Endothelial cell of umbilical vein (primary cell): ENCODE measurements at regions of chr7 and their contacts with region 1.

Region 1: DNA sequence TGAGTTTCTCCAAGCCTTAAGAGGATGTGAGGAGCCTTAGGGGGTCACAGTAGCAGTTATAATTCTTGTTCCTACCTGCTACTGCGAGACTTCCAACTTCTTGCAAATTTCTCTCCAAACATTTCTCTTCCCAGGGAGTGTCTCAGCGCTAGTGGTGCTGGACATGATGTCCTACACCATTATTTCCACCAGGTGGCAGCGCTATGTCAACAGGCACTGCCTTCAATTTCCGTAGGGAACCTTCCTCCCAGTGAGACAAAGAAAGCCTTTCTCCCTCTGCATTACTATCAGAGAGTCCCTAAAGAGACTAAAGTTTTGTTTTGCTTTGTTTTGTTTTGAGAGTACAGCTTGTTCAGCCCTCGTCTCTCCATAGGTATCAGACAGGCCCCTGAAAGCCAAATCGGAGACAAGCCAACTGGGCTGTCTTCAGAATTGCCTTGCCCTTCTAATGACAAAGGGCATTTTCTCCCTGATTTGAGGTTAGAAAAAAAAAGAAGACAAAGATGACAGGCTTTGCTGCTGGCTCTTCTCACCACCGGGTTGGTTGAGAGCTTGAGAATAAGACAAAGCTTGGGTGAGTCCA is 44.2 kb upstream of the GGCT start:
- DNase-seq: peak; percentile 82
- H3K4me3 ChIP-seq: no peak overlapping the region
- H3K27ac ChIP-seq: peak overlapping the region; percentile 69
- H3K4me1 ChIP-seq: peaks cover 35% of the 10 kb centered on the region
- H3K27me3 ChIP-seq: no peaks in the 10 kb centered on the region
- CTCF ChIP-seq: peak; percentile 76 to 82
- POLR2A ChIP-seq: no peak

Region 2: GRCh38 chr7:30478349-30479201 is 70.3 kb before region 1 on chr7 and contains the start of gene NOD1:
- CTCF ChIA-PET with region 1: interaction called, 4 read pairs
- POLR2A ChIA-PET with region 1: no interaction called
- dilution Hi-C with region 1: no loop called
- intact Hi-C with region 1: loop called (anchors 2 kb)
- DNase-seq: peak; percentile 81
- H3K4me3 ChIP-seq: peak within 1 kb of the TSS; percentile 60 to 92 (median 79)
- H3K27ac ChIP-seq: peak within 1 kb of the TSS; percentile 99
- H3K4me1 ChIP-seq: peaks cover 38% of the 10 kb centered on the region
- H3K27me3 ChIP-seq: no peaks in the 10 kb centered on the region
- CTCF ChIP-seq: no peak
- POLR2A ChIP-seq: no peak
- total RNA-seq, gene NOD1: 39.2 and 39.7 TPM in 2 replicates

Region 3: GRCh38 chr7:30510124-30511075 is 38.5 kb before region 1 on chr7:
- CTCF ChIA-PET with region 1: interaction called, 9 read pairs
- POLR2A ChIA-PET with region 1: no interaction called
- dilution Hi-C with region 1: no loop called
- intact Hi-C with region 1: loop called (anchors 1 kb)
- DNase-seq: peak; percentile 64
- H3K4me3 ChIP-seq: no peak overlapping the region
- H3K27ac ChIP-seq: no peak overlapping the region
- H3K4me1 ChIP-seq: no peaks in the 10 kb centered on the region
- H3K27me3 ChIP-seq: no peaks in the 10 kb centered on the region
- CTCF ChIP-seq: peak; percentile 64 to 65
- POLR2A ChIP-seq: no peak

Region 4: GRCh38 chr7:30594549-30595435 is 45.9 kb after region 1 on chr7 and contains the start of gene GARS1:
- CTCF ChIA-PET with region 1: no interaction called
- POLR2A ChIA-PET with region 1: no interaction called
- dilution Hi-C with region 1: no loop called
- intact Hi-C with region 1: loop called (anchors 1 kb)
- DNase-seq: peak; percentile 90
- H3K4me3 ChIP-seq: peak within 1 kb of the TSS; percentile 53 to 96 (median 57)
- H3K27ac ChIP-seq: peak within 1 kb of the TSS; percentile 84
- H3K4me1 ChIP-seq: peaks cover 21% of the 10 kb centered on the region
- H3K27me3 ChIP-seq: no peaks in the 10 kb centered on the region
- CTCF ChIP-seq: no peak
- POLR2A ChIP-seq: peak; percentile 96
- total RNA-seq, gene GARS1: 194 and 206 TPM in 2 replicates

Region 5: DNA sequence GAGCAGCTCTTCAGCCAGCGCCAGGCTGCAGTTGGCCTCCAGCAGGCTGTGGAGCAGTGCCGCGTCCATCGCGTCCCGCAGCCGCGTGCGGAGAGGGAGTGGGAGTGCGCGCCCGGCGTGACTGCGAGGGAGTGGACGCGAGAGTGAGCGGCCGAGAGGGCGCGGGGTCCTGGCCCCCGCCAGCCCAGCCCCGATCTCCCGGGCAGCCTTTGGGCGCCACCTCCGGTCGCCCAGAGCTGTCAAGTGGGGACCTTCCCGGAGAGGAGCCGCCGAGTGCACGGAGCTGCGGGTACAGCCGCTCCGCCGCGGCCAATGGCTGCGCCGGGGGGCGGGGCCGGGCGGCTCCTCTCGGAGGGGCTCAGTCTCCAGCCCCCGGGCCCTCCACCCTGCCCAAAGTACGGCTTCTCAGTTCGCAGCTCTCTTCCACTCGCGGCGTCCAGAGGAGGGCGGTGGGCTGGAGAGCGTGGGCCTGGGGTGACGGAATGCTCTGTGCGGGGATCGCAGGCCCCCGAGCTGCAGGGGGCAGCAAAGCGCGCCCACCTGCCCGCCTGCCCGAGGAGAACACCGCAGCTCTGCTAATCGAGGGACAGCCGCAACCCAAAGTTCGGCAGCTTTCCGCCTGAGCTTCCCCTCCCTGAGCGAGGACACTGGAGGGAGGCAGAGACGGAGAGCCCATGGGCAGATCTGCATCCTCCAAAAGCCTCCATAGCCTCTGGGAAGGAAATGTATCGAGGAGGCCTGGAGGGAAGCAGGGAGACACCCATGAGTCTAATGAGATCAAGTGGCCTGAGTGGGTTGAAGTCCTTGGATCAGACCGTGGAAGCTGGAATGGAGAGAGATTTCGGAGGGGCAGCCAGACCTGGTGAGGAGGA is 133.6 kb after region 1 on chr7 and contains the start of gene CRHR2:
- CTCF ChIA-PET with region 1: no interaction called
- POLR2A ChIA-PET with region 1: no interaction called
- dilution Hi-C with region 1: no loop called
- intact Hi-C with region 1: no loop called
- DNase-seq: peak; percentile 4
- H3K4me3 ChIP-seq: no peak within 1 kb of the TSS
- H3K27ac ChIP-seq: no peak within 1 kb of the TSS
- H3K4me1 ChIP-seq: no peaks in the 10 kb centered on the region
- H3K27me3 ChIP-seq: peaks cover 59 to 61% of the 10 kb centered on the region in 2 experiments
- CTCF ChIP-seq: peak; percentile 28 to 44
- POLR2A ChIP-seq: no peak
- total RNA-seq, gene CRHR2: not detected in 2 replicates